CD4-positive, alpha-beta T cell (primary cell): ENCODE measurements at regions of chr14 and their contacts with region 1.

Region 1: GRCh38 chr14:49767562-49768300 is at the start of gene KLHDC2:
- DNase-seq: peak; percentile 78 to 95 (median 87)
- ATAC-seq: peak; percentile 65
- H3K4me3 ChIP-seq: peak within 1 kb of the TSS; percentile 96
- H3K4me3 Mint-ChIP-seq: peak within 1 kb of the TSS; percentile 100
- H3K27ac ChIP-seq: peak within 1 kb of the TSS; percentile 93 to 95
- H3K27ac Mint-ChIP-seq: peak within 1 kb of the TSS; percentile 99
- H3K4me1 ChIP-seq: peaks cover 35% of the 10 kb centered on the region
- H3K4me1 Mint-ChIP-seq: peaks cover 45% of the 10 kb centered on the region
- H3K27me3 ChIP-seq: no peaks in the 10 kb centered on the region
- H3K27me3 Mint-ChIP-seq: no peaks in the 10 kb centered on the region
- CTCF ChIP-seq: no peak
- total RNA-seq, gene KLHDC2: 142 to 143 TPM

Region 2: DNA sequence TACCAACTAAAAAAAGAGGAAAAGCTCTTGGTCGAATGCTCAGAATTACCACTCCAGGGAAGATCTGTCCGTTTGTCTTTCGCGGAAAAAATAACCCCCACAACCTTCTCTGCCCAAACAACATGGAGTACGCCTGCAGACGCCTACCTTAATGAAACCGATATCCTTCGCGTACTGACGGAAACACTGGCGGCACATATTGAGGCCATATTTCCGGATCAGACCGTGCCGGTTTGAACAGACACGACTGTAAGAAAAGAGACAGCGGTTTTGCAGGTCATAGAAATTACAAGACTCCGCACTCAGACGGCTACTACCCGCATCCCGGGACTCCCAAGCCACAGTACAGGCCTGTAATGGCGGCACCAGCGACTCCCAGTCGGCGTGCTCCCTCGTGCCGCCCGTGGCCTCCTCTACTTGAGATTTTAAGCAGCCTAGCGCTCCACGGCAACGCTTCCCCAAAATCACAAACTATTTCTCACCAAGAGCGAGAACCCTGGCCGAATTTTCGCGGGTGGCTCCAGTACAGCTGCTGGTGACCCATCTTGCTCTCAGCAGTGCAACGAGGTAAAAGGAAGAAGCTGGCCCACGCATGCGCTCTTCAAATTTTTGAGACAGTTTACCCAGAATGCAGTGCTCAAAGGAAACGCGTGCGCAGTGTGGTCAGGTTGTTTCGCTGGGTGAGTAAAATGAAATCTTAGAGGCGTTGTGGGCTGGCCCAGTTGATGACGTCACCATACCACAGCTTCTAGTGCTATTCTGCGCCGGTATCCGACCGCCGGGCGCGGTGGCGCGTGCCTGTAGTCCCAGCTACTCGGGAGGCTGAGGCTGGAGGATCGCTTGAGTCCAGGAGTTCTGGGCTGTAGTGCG is 181.7 kb before region 1 on chr14 and contains the start of gene RPS29:
- CTCF ChIA-PET with region 1: interaction called, 5 read pairs
- POLR2A ChIA-PET with region 1: interaction called, 65 read pairs
- intact Hi-C with region 1: no loop called
- DNase-seq: peak; percentile 95 to 100 (median 98)
- ATAC-seq: peak; percentile 77
- H3K4me3 ChIP-seq: peak within 1 kb of the TSS; percentile 89
- H3K4me3 Mint-ChIP-seq: peak within 1 kb of the TSS; percentile 90
- H3K27ac ChIP-seq: peak within 1 kb of the TSS; percentile 93 to 95
- H3K27ac Mint-ChIP-seq: peak within 1 kb of the TSS; percentile 99
- H3K4me1 ChIP-seq: peaks cover 33% of the 10 kb centered on the region
- H3K4me1 Mint-ChIP-seq: peaks cover 52% of the 10 kb centered on the region
- H3K27me3 ChIP-seq: no peaks in the 10 kb centered on the region
- H3K27me3 Mint-ChIP-seq: peaks cover 10% of the 10 kb centered on the region
- CTCF ChIP-seq: no peak
- total RNA-seq, gene RPS29: 3,356 to 3,996 TPM

Region 3: GRCh38 chr14:49620182-49621113 is 147.3 kb before region 1 on chr14 and contains the starts of genes MGAT2 and RPL36AL:
- CTCF ChIA-PET with region 1: interaction called, 13 read pairs
- POLR2A ChIA-PET with region 1: interaction called, 83 read pairs
- intact Hi-C with region 1: loop called in 1 of 2 experiments (anchors 1 kb)
- DNase-seq: peak; percentile 84 to 97 (median 91)
- ATAC-seq: peak; percentile 79
- H3K4me3 ChIP-seq: peak within 1 kb of the TSS; percentile 95
- H3K4me3 Mint-ChIP-seq: peak within 1 kb of the TSS; percentile 99
- H3K27ac ChIP-seq: peak within 1 kb of the TSS; percentile 98 to 99
- H3K27ac Mint-ChIP-seq: peak within 1 kb of the TSS; percentile 100
- H3K4me1 ChIP-seq: peaks cover 36% of the 10 kb centered on the region
- H3K4me1 Mint-ChIP-seq: peaks cover 73% of the 10 kb centered on the region
- H3K27me3 ChIP-seq: no peaks in the 10 kb centered on the region
- H3K27me3 Mint-ChIP-seq: no peaks in the 10 kb centered on the region
- CTCF ChIP-seq: peak; percentile 22
- total RNA-seq, gene MGAT2: 15.0 to 15.1 TPM
- total RNA-seq, gene RPL36AL: 339 to 370 TPM

Region 4: DNA sequence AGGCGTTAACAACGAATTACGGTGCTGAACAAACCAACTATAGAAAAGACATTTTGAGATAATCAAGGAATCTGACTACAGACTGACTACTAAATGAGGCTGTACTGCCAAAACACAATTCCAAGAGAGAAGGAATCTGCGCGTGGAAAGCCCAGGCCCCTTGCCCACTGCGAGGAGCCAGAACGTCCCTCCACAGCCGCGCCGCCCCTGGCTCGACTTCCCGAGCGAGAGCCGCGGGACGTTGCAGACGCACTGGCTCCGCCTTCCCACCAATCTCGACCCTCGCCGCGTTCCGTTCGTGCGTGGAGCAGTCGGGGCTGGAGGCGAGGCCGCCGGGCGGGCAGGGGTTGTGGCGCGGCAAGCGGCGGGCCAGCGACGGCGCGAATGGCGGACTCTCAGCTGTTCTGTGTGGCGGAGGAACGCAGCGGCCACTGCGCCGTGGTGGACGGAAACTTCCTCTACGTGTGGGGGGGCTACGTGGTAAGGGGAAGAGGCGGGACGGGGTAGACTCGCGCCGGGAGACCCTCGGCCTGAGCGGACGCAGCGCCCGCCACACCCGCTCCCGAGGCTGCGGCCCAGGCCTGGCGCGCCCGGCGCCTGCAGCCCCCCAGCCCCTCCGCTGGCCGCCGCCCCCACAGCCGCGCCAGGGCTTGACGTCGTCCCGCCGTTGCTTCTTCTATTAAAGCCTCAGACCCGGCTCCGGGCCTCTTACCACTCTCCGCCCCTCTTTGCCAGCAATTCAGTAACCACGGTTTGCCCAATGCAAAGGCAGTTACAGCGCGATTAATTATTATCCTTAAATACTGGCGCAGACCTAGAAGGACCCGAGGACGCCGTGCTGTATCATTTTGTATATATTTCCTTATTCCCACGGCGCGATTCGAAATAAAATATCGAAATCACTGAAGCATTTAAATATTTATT is 74.7 kb before region 1 on chr14 and contains the start of gene KLHDC1:
- CTCF ChIA-PET with region 1: interaction called, 4 read pairs
- POLR2A ChIA-PET with region 1: interaction called, 34 read pairs
- intact Hi-C with region 1: loop called (anchors 2 to 5 kb)
- DNase-seq: peak; percentile 66 to 90 (median 78)
- ATAC-seq: peak; percentile 85
- H3K4me3 ChIP-seq: peak within 1 kb of the TSS; percentile 69
- H3K4me3 Mint-ChIP-seq: peak within 1 kb of the TSS; percentile 97
- H3K27ac ChIP-seq: peak within 1 kb of the TSS; percentile 60 to 70
- H3K27ac Mint-ChIP-seq: peak within 1 kb of the TSS; percentile 88
- H3K4me1 ChIP-seq: peaks cover 10% of the 10 kb centered on the region
- H3K4me1 Mint-ChIP-seq: peaks cover 50% of the 10 kb centered on the region
- H3K27me3 ChIP-seq: no peaks in the 10 kb centered on the region
- H3K27me3 Mint-ChIP-seq: no peaks in the 10 kb centered on the region
- CTCF ChIP-seq: no peak
- total RNA-seq, gene KLHDC1: 9.8 to 11.8 TPM

Region 5: DNA sequence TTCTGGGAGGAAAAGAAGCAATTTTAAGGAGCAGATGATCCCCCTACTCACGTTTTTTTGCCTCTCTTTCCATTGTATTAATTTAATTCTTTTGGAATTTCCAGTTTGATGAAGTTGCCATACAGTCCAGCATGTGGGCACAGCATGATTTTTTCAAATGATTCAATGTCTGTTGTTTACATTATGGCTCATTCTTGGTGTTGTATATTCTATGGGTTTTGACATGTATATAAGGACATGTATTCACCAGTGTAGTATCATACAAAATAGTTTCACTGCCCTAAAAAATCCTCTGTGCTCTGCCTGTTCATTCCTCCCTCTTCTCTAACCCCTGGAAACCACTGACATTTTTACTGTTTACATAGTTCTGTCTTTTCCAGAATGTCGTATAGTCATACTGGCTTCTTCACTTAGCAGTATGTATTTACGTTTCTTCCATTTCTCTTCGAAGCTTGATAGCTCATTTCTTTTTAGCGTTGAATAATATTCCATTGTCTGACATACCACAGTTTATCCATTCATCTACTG is 13.1 kb before region 1 on chr14:
- CTCF ChIA-PET with region 1: no interaction called
- POLR2A ChIA-PET with region 1: no interaction called
- intact Hi-C with region 1: no loop called
- DNase-seq: no peak
- ATAC-seq: no peak
- H3K4me3 ChIP-seq: no peak overlapping the region
- H3K4me3 Mint-ChIP-seq: no peak overlapping the region
- H3K27ac ChIP-seq: no peak overlapping the region
- H3K27ac Mint-ChIP-seq: no peak overlapping the region
- H3K4me1 ChIP-seq: no peaks in the 10 kb centered on the region
- H3K4me1 Mint-ChIP-seq: no peaks in the 10 kb centered on the region
- H3K27me3 ChIP-seq: no peaks in the 10 kb centered on the region
- H3K27me3 Mint-ChIP-seq: no peaks in the 10 kb centered on the region
- CTCF ChIP-seq: no peak

Region 6: GRCh38 chr14:49852301-49853157 is 84.8 kb after region 1 on chr14 and contains the start of gene NEMF:
- CTCF ChIA-PET with region 1: interaction called, 5 read pairs
- POLR2A ChIA-PET with region 1: interaction called, 47 read pairs
- intact Hi-C with region 1: loop called in 1 of 2 experiments (anchors 5 kb)
- DNase-seq: peak; percentile 67 to 91 (median 72)
- ATAC-seq: peak; percentile 75
- H3K4me3 ChIP-seq: peak within 1 kb of the TSS; percentile 97
- H3K4me3 Mint-ChIP-seq: peak within 1 kb of the TSS; percentile 99
- H3K27ac ChIP-seq: peak within 1 kb of the TSS; percentile 64 to 80
- H3K27ac Mint-ChIP-seq: peak within 1 kb of the TSS; percentile 91
- H3K4me1 ChIP-seq: peaks cover 17% of the 10 kb centered on the region
- H3K4me1 Mint-ChIP-seq: peaks cover 46% of the 10 kb centered on the region
- H3K27me3 ChIP-seq: no peaks in the 10 kb centered on the region
- H3K27me3 Mint-ChIP-seq: no peaks in the 10 kb centered on the region
- CTCF ChIP-seq: peak; percentile 89
- total RNA-seq, gene NEMF: 96.0 to 97.7 TPM

Region 7: GRCh38 chr14:49982501-49982951 is 214.8 kb after region 1 on chr14:
- CTCF ChIA-PET with region 1: no interaction called
- POLR2A ChIA-PET with region 1: no interaction called
- intact Hi-C with region 1: no loop called
- DNase-seq: peak in 4 of 14 experiments; percentile 32 to 71 (median 62)
- ATAC-seq: peak; percentile 65
- H3K4me3 ChIP-seq: peak overlapping the region; percentile 17
- H3K4me3 Mint-ChIP-seq: peak overlapping the region; percentile 44
- H3K27ac ChIP-seq: peak overlapping the region in 1 of 2 donors; percentile 61
- H3K27ac Mint-ChIP-seq: peak overlapping the region; percentile 90
- H3K4me1 ChIP-seq: peaks cover 59% of the 10 kb centered on the region
- H3K4me1 Mint-ChIP-seq: peaks cover 82% of the 10 kb centered on the region
- H3K27me3 ChIP-seq: no peaks in the 10 kb centered on the region
- H3K27me3 Mint-ChIP-seq: no peaks in the 10 kb centered on the region
- CTCF ChIP-seq: no peak